Aorta (tissue), 5 donors: ENCODE measurements at regions of chr2 and their contacts with region 1.

Region 1: DNA sequence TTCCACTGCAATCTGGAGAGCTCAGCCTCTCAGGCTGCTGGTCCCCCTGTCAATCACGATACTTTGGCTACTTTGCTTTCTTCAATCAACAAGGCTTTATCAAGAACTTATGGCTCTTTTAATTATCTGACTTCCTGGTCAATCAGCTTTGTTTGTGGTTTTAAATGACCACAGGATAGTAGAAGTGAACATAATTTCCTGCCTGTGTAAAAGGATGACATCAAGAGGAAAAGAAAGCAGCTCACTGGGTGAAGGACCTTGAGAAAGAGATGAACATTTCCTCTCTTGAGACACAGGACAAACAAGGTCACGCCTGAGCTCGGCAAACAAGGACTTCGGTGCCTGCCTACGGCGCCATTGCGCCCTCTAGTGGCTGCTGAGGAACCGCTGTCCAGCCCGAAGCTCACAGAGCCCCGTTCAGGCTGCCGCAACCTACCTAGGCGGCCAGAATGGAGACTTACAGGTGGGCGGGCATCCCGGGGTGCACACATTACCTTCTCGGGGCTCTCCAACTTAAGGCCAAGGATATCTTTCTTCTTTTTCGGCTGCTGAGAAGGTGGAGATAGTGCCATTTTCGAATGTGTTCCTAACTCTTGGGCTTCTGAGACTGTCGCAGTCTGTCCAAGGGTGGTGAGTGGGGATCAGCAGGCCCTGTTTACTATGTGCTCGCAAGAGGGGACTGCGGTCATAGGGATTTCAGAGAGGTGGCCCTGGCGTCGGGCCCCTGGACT is 54.0 kb downstream of the IL1RL2 start:
- DNase-seq: peak; percentile 94 to 97
- ATAC-seq: peak; percentile 94
- H3K4me3 ChIP-seq: no peak overlapping the region
- H3K27ac ChIP-seq: peak overlapping the region in 1 of 2 donors; percentile 48
- H3K4me1 ChIP-seq: no peaks in the 10 kb centered on the region
- H3K27me3 ChIP-seq: no peaks in the 10 kb centered on the region

Region 2: DNA sequence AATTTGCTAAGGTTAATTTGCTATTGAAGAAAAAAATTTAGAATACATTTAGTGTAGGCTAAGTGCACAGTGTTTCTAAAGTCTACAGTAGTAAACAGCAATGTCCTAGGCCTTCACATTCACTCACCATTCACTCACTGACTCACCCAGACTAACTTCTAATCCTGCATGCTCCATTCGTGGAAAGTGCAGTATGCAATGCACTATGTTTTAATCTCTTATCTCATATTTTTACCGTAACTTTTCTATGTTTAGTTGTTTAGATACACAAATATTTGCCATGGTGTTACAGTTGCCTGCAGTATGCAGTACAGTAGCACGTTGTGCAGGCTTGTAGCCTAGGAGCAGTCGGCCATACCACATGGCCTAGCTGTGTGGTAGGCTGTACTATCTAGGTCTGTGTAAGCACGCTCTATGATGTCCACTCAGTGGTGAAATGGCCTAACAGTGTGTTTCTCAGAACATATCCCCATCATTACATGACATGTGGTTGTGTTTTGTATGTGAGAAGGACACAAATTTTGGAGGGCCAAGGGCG is 747.8 kb before region 1 on chr2:
- intact Hi-C with region 1: no loop called
- DNase-seq: no peak
- ATAC-seq: no peak
- H3K4me3 ChIP-seq: no peak overlapping the region
- H3K27ac ChIP-seq: no peak overlapping the region
- H3K4me1 ChIP-seq: no peaks in the 10 kb centered on the region
- H3K27me3 ChIP-seq: no peaks in the 10 kb centered on the region

Region 3: DNA sequence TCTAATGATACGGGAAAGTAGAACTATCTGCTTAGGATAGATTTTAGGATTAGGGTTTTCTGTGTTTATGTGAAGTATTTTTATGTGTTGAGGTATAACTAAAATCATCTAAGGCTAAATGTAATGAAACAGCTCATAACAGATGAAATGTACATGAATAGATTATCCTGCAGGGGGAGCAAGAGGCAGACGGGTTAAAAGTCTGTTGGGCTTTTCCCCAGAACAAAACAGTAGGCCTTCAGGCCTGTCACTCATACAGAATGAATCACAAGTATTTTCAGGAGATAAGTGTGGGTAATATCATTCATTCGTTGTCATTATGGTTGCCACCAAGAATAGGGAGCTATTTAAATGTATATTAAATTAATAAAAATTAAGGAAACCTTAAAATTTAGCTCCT is 356.9 kb before region 1 on chr2:
- intact Hi-C with region 1: loop called (anchors 5 to 10 kb)
- DNase-seq: no peak
- ATAC-seq: peak; percentile 70
- H3K4me3 ChIP-seq: no peak overlapping the region
- H3K27ac ChIP-seq: no peak overlapping the region
- H3K4me1 ChIP-seq: no peaks in the 10 kb centered on the region
- H3K27me3 ChIP-seq: no peaks in the 10 kb centered on the region

Region 4: DNA sequence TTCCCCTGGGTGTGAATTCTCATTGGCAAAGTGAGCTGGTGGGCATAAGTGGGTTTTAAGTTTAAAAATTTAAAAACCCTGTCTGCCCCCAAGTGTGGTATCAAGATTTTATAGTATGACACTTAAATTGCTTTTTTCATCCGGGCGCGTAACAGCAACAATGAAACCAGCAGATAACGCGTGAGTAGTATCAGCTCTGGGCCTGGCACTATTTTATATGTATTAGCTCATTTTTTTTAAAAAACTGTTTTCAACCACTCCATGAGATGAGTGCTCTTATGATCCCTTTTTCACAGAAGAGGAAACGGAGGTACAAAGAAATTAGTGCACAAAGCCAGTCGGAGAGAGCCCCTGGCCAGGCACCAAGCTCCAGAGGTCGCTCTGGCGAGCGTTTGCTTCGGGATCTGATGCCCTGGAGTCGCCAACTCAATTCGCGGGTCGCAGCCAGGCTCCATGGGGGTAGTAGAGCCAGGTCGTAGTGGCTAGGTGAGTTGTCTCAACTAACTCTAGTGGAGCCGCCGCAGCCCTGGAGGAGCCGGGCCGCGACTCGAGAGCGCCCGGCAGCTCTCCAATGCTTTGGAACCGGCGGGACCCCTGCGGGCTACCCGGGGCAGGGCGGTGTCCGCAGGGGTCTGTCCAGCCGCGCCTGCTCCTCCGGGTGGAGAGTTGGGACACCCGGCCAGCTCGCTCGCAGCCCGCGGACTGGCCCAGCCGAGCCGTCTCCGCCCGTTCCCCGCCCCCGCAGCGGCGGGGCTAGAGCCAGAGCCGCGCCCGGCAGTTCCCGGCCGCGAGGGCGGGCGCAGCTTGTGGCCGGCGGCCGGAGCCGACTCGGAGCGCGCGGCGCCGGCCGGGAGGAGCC is 98.6 kb before region 1 on chr2 and contains the start of gene IL1R1:
- intact Hi-C with region 1: no loop called
- DNase-seq: peak; percentile 92 to 95
- ATAC-seq: peak; percentile 93
- H3K4me3 ChIP-seq: peak within 1 kb of the TSS; percentile 40 to 72
- H3K27ac ChIP-seq: peak within 1 kb of the TSS; percentile 58 to 82
- H3K4me1 ChIP-seq: no peaks in the 10 kb centered on the region
- H3K27me3 ChIP-seq: no peaks in the 10 kb centered on the region
- total RNA-seq, gene IL1R1: 135 to 155 TPM

Region 5: GRCh38 chr2:102197389-102198137 is 43.2 kb before region 1 on chr2:
- intact Hi-C with region 1: loop called in 1 of 2 experiments (anchors 5 kb)
- DNase-seq: no peak
- ATAC-seq: no peak
- H3K4me3 ChIP-seq: no peak overlapping the region
- H3K27ac ChIP-seq: no peak overlapping the region
- H3K4me1 ChIP-seq: no peaks in the 10 kb centered on the region
- H3K27me3 ChIP-seq: no peaks in the 10 kb centered on the region